CD4-positive, alpha-beta memory T cell (primary cell): ENCODE measurements at regions of chr17 and their contacts with region 1.

Region 1: DNA sequence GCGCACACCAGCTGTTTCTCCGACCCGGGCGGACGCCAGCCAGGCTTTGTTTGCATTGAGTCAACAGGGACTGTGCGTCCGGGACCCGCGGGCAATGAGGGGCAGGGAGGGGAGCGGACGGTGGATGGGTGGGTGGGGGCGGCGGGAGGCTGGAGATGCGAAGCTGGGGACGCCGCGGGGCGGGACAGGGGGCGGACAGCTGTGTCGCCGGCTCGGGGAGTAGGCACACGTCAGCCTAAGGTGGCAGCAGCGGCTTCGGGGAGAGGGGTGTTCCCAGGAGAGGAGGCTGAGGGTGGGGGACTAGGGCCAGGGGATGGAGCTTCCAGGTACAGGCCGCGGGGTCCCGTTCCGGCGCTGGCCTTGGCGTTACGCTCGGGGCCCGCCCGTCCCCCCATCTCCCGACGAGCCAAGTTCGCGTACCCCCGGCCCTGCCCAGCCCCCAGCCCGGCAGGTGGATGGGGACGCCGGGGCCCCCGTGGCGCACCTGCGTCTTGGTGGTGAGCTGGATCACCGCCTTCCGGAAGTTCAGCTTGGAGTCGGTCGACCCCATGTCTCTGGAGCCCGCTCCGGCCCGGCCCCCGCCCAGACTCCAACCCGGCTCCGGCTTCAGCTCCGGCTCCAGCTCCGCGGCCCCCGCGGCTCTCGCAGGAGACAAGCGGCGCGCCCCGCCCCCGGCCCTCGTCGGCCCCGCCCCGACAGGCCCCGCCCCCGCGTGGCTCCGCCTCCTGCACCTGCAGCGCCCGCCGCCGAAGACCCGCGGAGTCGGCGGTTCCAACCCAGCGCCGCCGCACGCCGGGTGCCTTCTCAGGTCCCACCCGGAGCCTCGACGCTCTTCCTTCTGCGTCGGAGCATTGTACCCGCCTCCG is at the start of gene HID1:
- DNase-seq: peak; percentile 71 to 75 (median 74)
- H3K4me3 ChIP-seq: peak within 1 kb of the TSS; percentile 36 to 62
- H3K4me3 Mint-ChIP-seq: peak within 1 kb of the TSS; percentile 81 to 92 (median 86)
- H3K27ac ChIP-seq: peak within 1 kb of the TSS; percentile 32
- H3K27ac Mint-ChIP-seq: peak within 1 kb of the TSS; percentile 57 to 90 (median 74)
- H3K4me1 ChIP-seq: peaks cover 15% of the 10 kb centered on the region
- H3K4me1 Mint-ChIP-seq: peaks cover 4 to 11% (median 7%) of the 10 kb centered on the region in 4 donors
- H3K27me3 ChIP-seq: no peaks in the 10 kb centered on the region
- H3K27me3 Mint-ChIP-seq: peaks cover 3 to 5% of the 10 kb centered on the region in 2 donors
- total RNA-seq, gene HID1: 17.5 to 19.5 TPM

Region 2: DNA sequence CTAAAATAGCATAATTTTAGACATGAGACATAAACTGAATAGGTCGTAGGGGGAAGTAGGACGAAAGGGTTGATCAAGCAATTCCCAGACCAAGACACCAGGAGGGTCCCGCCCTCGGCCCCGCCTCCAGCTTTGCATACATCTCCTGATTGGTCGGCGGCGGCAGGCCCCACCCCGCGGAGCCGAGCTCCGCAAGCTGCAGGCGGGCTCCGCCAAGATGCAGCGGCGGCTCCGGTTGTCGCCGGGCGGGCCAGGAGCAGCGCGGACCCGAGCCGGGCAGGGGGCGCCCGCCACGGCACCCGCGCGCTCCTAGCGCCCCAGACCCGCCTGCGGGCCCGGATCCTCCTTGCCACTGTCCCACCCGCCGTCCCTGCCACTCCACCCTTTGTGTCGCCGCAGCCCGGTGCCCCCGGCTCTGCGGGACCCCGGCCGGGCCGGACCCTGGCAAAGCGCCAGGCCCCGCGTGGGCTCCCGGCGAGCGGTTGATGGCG is 15.1 kb after region 1 on chr17 and contains the start of gene CDR2L:
- CTCF ChIA-PET with region 1: interaction called, 8 read pairs
- POLR2A ChIA-PET with region 1: interaction called, 12 read pairs
- intact Hi-C with region 1: loop called (anchors 1 kb)
- DNase-seq: peak; percentile 89 to 91 (median 90)
- H3K4me3 ChIP-seq: peak within 1 kb of the TSS in 1 of 2 donors; percentile 61
- H3K4me3 Mint-ChIP-seq: peak within 1 kb of the TSS; percentile 84 to 94 (median 90)
- H3K27ac ChIP-seq: no peak within 1 kb of the TSS
- H3K27ac Mint-ChIP-seq: peak within 1 kb of the TSS; percentile 3 to 84 (median 72)
- H3K4me1 ChIP-seq: peaks cover 17% of the 10 kb centered on the region
- H3K4me1 Mint-ChIP-seq: peaks cover 6 to 22% (median 12%) of the 10 kb centered on the region in 4 donors
- H3K27me3 ChIP-seq: no peaks in the 10 kb centered on the region
- H3K27me3 Mint-ChIP-seq: peaks cover 2% of the 10 kb centered on the region in 2 donors
- total RNA-seq, gene CDR2L: 0.08 to 0.20 TPM

Region 3: GRCh38 chr17:75225016-75225415 is 252.7 kb after region 1 on chr17:
- CTCF ChIA-PET with region 1: no interaction called
- POLR2A ChIA-PET with region 1: no interaction called
- intact Hi-C with region 1: no loop called
- DNase-seq: no peak
- H3K4me3 ChIP-seq: no peak overlapping the region
- H3K4me3 Mint-ChIP-seq: no peak overlapping the region
- H3K27ac ChIP-seq: no peak overlapping the region
- H3K27ac Mint-ChIP-seq: peak overlapping the region in 3 of 7 donors; percentile 2 to 82 (median 24)
- H3K4me1 ChIP-seq: no peaks in the 10 kb centered on the region
- H3K4me1 Mint-ChIP-seq: no peaks in the 10 kb centered on the region
- H3K27me3 ChIP-seq: no peaks in the 10 kb centered on the region
- H3K27me3 Mint-ChIP-seq: no peaks in the 10 kb centered on the region